H1 (cell line): ENCODE measurements at regions of chr4 and their contacts with region 1.

Region 1: DNA sequence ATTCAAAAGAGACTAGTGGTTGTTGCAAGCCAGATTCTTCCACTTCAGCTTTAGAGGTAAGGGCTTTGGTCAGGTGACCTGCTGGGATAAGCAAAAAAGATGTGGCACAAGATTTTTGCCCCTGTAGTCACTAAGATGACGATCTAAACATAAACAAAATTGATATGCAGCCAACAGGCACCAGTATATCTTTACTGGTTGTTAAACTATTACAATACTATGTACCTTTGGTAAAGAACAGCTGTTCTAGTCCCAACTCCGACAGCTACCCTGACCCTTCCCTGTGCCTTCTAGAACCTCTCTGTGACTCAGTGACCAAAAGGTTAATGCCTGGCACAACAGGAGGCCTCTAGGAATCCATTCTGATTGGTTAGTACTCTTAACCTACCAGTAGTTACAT is 59.6 kb downstream of the MGST2 start:
- DNase-seq: no peak
- H3K4me3 ChIP-seq: no peak overlapping the region
- H3K27ac ChIP-seq: no peak overlapping the region
- H3K4me1 ChIP-seq: no peaks in the 10 kb centered on the region
- H3K27me3 ChIP-seq: no peaks in the 10 kb centered on the region
- CTCF ChIP-seq: no peak
- EP300 ChIP-seq: no peak
- POLR2A ChIP-seq: no peak
- RAD21 ChIP-seq: no peak

Region 2: GRCh38 chr4:139711461-139711860 is 13.8 kb before region 1 on chr4:
- CTCF ChIA-PET with region 1: interaction called, 10 read pairs
- POLR2A ChIA-PET with region 1: no interaction called
- DNase-seq: no peak
- H3K4me3 ChIP-seq: no peak overlapping the region
- H3K27ac ChIP-seq: no peak overlapping the region
- H3K4me1 ChIP-seq: no peaks in the 10 kb centered on the region
- H3K27me3 ChIP-seq: peaks cover 10 to 39% (median 27%) of the 10 kb centered on the region in 4 experiments
- CTCF ChIP-seq: no peak
- EP300 ChIP-seq: no peak
- POLR2A ChIP-seq: no peak
- RAD21 ChIP-seq: no peak